ENCODE measurements at regions of chr16 and their contacts with region 1.

Region 1: DNA sequence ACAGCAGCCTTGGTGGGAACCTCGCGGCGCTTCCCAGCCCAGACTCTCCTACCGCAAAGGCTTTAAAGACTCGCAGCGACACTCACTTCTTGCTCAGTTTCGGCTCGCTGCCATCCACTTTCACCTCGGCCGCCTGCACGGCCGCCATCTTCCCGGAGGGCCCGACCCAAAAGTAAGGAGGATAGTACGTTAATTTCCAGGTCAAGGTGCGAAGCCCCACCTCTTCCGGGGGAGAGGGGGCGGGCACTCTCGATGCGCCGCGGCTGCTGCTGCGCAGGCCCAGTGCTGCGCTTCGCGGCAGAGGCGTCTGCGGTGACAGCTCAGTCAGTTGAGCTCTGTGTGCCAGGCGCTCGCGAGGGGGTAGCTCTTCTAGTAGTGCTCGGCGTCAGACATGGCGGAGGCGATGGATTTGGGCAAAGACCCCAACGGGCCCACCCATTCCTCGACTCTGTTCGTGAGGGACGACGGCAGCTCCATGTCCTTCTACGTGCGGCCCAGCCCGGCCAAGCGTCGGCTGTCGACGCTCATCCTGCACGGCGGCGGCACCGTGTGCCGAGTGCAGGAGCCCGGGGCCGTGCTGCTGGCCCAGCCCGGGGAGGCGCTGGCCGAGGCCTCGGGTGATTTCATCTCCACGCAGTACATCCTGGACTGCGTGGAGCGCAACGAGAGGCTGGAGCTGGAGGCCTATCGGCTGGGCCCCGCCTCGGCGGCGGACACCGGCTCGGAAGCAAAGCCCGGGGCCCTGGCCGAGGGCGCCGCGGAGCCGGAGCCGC is at the starts of genes KARS1 and TERF2IP:
- DNase-seq: peak; percentile 96
- H3K4me3 Mint-ChIP-seq: peak within 1 kb of the TSS; percentile 95
- H3K27ac Mint-ChIP-seq: peak within 1 kb of the TSS; percentile 99
- H3K4me1 Mint-ChIP-seq: peaks cover 67% of the 10 kb centered on the region
- H3K27me3 Mint-ChIP-seq: no peaks in the 10 kb centered on the region
- total RNA-seq, gene KARS1: 169 to 170 TPM
- total RNA-seq, gene TERF2IP: 92.7 to 96.2 TPM

Region 2: GRCh38 chr16:75432828-75433731 is 214.6 kb before region 1 on chr16 and contains the start of gene CFDP1:
- CTCF ChIA-PET with region 1: no interaction called
- POLR2A ChIA-PET with region 1: interaction called, 36 read pairs
- DNase-seq: peak; percentile 95
- H3K4me3 Mint-ChIP-seq: peak within 1 kb of the TSS; percentile 81
- H3K27ac Mint-ChIP-seq: peak within 1 kb of the TSS; percentile 93
- H3K4me1 Mint-ChIP-seq: peaks cover 33% of the 10 kb centered on the region
- H3K27me3 Mint-ChIP-seq: no peaks in the 10 kb centered on the region
- total RNA-seq, gene CFDP1: 35.1 to 36.2 TPM

Region 3: GRCh38 chr16:75519881-75520280 is 127.8 kb before region 1 on chr16:
- CTCF ChIA-PET with region 1: interaction called, 16 read pairs
- POLR2A ChIA-PET with region 1: interaction called, 25 read pairs
- DNase-seq: no peak
- H3K4me3 Mint-ChIP-seq: no peak overlapping the region
- H3K27ac Mint-ChIP-seq: no peak overlapping the region
- H3K4me1 Mint-ChIP-seq: peaks cover 13% of the 10 kb centered on the region
- H3K27me3 Mint-ChIP-seq: peaks cover 1% of the 10 kb centered on the region

Region 4: GRCh38 chr16:75566040-75566810 is 81.5 kb before region 1 on chr16 and contains the start of gene GABARAPL2:
- CTCF ChIA-PET with region 1: interaction called, 4 read pairs
- POLR2A ChIA-PET with region 1: interaction called, 35 read pairs
- DNase-seq: peak; percentile 92
- H3K4me3 Mint-ChIP-seq: peak within 1 kb of the TSS; percentile 100
- H3K27ac Mint-ChIP-seq: peak within 1 kb of the TSS; percentile 87
- H3K4me1 Mint-ChIP-seq: peaks cover 38% of the 10 kb centered on the region
- H3K27me3 Mint-ChIP-seq: peaks cover 14% of the 10 kb centered on the region
- total RNA-seq, gene GABARAPL2: 84.9 to 86.2 TPM

Region 5: DNA sequence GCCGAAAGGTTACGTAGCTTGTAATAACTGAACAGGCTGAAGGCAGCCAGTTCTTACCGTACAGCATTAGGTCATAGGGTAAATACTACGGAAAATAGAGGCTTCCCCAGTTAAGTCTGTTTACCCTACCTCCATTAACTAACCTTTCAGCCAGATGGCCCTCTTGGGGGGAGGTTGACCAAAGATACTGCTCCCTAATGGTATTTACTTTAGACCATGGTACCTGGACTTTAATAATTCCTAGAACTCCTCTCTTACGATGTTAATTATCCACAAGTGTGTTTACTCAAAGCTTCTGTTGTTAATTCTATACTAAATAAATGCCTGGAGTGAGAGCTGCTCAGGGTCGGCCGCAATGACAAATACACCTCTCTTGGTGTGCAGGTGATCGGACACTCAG is 14.8 kb before region 1 on chr16:
- CTCF ChIA-PET with region 1: interaction called, 3 read pairs
- POLR2A ChIA-PET with region 1: interaction called, 46 read pairs
- DNase-seq: no peak
- H3K4me3 Mint-ChIP-seq: no peak overlapping the region
- H3K27ac Mint-ChIP-seq: no peak overlapping the region
- H3K4me1 Mint-ChIP-seq: peaks cover 27% of the 10 kb centered on the region
- H3K27me3 Mint-ChIP-seq: no peaks in the 10 kb centered on the region

Region 6: GRCh38 chr16:77190478-77191258 is 1543.0 kb after region 1 on chr16 and contains the start of gene MON1B:
- CTCF ChIA-PET with region 1: no interaction called
- POLR2A ChIA-PET with region 1: interaction called, 21 read pairs
- DNase-seq: peak; percentile 95
- H3K4me3 Mint-ChIP-seq: peak within 1 kb of the TSS; percentile 93
- H3K27ac Mint-ChIP-seq: peak within 1 kb of the TSS; percentile 100
- H3K4me1 Mint-ChIP-seq: peaks cover 38% of the 10 kb centered on the region
- H3K27me3 Mint-ChIP-seq: peaks cover 4% of the 10 kb centered on the region
- total RNA-seq, gene MON1B: 74.1 to 75.4 TPM

Measured in activated CD4-positive, alpha-beta memory T cell treated with anti-CD3 and anti-CD28 coated beads, Interleukin-2, amount 10 ng/mL, durations not matched to agents 7 days and 5 days (primary cell).